ENCODE measurements at regions of chr13 and their contacts with region 1.

Region 1: GRCh38 chr13:24627099-24627714 is 53.0 kb upstream of the ATP12A start:
- DNase-seq: peak; percentile 72
- H3K4me3 ChIP-seq: no peak overlapping the region
- H3K27ac ChIP-seq: no peak overlapping the region
- H3K4me1 ChIP-seq: peaks cover 11% of the 10 kb centered on the region
- H3K27me3 ChIP-seq: no peaks in the 10 kb centered on the region
- CTCF ChIP-seq: peak; percentile 49

Region 2: DNA sequence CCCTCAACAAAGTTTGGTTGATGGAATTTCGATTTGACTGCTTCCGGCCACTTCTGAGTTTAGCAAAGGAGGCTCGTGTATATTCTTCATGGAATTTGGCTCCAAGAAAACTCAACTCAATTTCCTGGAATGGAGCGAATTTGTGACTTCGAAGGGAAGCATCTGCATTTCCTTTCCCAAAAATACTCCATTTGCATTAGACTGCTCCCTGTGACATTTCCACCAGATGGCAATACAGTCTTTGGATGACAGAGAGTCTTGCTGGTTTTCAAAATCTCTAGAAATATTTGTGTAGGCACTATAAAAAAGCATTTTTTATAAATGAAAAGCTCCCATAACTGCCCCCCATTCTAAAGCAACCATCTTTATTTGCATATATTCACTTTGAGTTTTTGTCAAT is 313.8 kb before region 1 on chr13:
- intact Hi-C with region 1: no loop called
- DNase-seq: no peak
- H3K4me3 ChIP-seq: no peak overlapping the region
- H3K27ac ChIP-seq: no peak overlapping the region
- H3K4me1 ChIP-seq: no peaks in the 10 kb centered on the region
- H3K27me3 ChIP-seq: no peaks in the 10 kb centered on the region
- CTCF ChIP-seq: peak; percentile 11

Region 3: DNA sequence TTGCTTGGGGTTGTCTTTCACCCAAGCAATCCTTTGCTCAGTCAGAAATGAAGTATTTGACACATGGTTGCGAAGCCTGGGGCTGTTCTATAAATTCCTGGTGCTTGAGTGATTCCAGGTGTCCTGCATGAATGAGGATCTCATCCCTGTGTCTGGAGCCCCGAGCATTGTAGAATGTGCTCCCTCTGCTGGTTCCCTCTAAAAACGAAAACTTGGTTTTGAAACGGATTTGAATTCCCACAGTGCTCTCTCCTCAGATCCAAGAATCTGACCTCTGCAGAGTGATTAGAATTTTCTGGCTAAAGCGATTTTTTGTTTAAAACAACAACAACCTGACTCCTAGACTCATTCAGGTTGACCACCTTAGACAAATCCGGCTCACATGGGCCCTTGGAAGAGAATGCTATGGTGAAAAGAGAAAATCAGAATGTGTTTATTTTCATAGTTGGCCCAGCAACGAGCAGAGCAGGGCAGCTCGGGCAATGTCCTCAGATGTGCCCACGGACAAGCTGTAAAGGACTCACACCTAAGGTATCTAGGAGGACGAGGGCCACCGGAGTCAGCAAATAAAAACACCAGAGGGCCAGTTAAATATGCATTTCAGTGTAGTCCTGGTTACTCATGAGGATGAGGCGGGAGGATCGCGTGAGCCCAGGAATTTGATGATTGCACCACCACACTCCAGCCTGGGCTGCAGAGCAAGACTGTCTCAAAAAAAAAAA is 44.3 kb after region 1 on chr13:
- intact Hi-C with region 1: loop called (anchors 5 kb)
- DNase-seq: peak; percentile 77
- H3K4me3 ChIP-seq: no peak overlapping the region
- H3K27ac ChIP-seq: peak overlapping the region; percentile 81
- H3K4me1 ChIP-seq: peaks cover 8% of the 10 kb centered on the region
- H3K27me3 ChIP-seq: no peaks in the 10 kb centered on the region
- CTCF ChIP-seq: peak; percentile 42

Measured in colonic mucosa (tissue), 4 donors.